Heart right ventricle (tissue), 16 donors: ENCODE measurements at regions of chr9 and their contacts with region 1.

Region 1: GRCh38 chr9:131485728-131486422 is 16.8 kb upstream of the POMT1 start:
- DNase-seq: no peak
- ATAC-seq: no peak
- H3K4me3 ChIP-seq: no peak overlapping the region
- H3K27ac ChIP-seq: peak overlapping the region in 3 of 10 donors; percentile 8 to 80 (median 28)
- H3K4me1 ChIP-seq: peaks cover 2 to 59% (median 24%) of the 10 kb centered on the region in 9 donors
- H3K27me3 ChIP-seq: no peaks in the 10 kb centered on the region
- CTCF ChIP-seq: no peak

Region 2: DNA sequence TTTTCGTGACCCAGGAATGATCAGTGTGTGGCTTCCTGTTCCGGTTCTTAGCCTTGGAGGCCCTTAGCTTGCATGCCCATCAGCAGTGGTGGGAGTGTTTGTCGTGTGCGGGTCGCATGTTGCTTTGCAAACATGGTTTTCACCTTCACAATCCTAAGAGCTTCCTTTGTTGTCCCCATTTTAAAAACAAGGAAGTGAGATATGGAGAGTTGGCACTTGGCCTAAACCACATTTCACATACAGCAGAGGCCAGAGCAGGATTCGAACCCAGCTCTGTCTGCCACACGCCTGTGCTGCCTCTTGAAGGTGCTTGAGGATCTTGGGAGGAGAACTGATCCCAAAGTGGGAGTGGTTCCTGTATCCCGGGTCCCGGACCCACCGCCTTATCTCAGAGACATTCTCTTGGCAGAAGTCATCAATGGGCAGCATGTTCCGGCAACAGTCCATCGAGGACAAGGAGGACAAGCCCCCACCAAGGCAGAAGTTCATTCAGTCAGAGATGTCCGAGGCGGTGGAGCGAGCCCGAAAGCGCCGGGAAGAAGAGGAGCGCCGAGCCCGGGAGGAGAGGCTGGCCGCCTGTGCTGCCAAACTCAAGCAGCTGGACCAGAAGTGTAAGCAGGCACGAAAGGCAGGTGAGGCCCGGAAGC is 21.4 kb before region 1 on chr9:
- intact Hi-C with region 1: no loop called
- DNase-seq: no peak
- ATAC-seq: peak in 1 of 8 donors; percentile 40
- H3K4me3 ChIP-seq: no peak overlapping the region
- H3K27ac ChIP-seq: no peak overlapping the region
- H3K4me1 ChIP-seq: peaks cover 0 to 6% (median 0%) of the 10 kb centered on the region in 9 donors
- H3K27me3 ChIP-seq: no peaks in the 10 kb centered on the region
- CTCF ChIP-seq: no peak

Region 3: DNA sequence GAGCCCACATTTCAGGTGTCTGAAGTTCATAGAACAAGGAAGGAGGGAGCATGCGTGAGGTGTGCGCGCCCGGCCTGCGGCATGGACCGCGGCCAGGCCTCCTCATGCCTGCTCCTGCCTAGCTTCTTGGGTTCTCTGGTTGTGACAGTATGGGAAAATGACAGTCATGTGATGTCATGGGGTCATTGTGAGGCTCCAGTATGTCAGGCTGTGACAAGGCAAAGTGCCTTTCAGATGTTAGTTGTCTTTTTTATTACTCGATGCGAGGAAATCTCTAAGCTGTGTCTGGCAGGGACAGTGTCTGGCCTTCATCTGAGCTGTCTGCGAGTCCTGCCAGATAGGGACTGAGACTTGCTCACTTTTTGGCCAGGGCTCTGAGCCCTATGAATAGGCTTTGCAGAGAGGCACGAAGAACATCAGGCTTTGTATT is 31.9 kb after region 1 on chr9:
- intact Hi-C with region 1: loop called in 1 of 10 experiments (anchors 1 kb)
- DNase-seq: peak in 1 of 2 donors; percentile 62
- ATAC-seq: peak; percentile 81 to 91 (median 88)
- H3K4me3 ChIP-seq: no peak overlapping the region
- H3K27ac ChIP-seq: peak overlapping the region in 9 of 10 donors; percentile 55 to 89 (median 72)
- H3K4me1 ChIP-seq: peaks cover 0 to 31% (median 10%) of the 10 kb centered on the region in 9 donors
- H3K27me3 ChIP-seq: no peaks in the 10 kb centered on the region
- CTCF ChIP-seq: no peak